Activated CD4-positive, alpha-beta memory T cell treated with anti-CD3 and anti-CD28 coated beads, Interleukin-2, amount 10 ng/mL, durations not matched to agents 7 days and 5 days (primary cell): ENCODE measurements at regions of chr12 and their contacts with region 1.

Region 1: GRCh38 chr12:50111693-50112455 is at the start of gene COX14:
- DNase-seq: peak; percentile 99
- H3K4me3 Mint-ChIP-seq: peak within 1 kb of the TSS; percentile 93
- H3K27ac Mint-ChIP-seq: peak within 1 kb of the TSS; percentile 96
- H3K4me1 Mint-ChIP-seq: peaks cover 44% of the 10 kb centered on the region
- H3K27me3 Mint-ChIP-seq: no peaks in the 10 kb centered on the region
- total RNA-seq, gene COX14: 53.5 to 55.3 TPM

Region 2: GRCh38 chr12:49967042-49967776 is 144.7 kb before region 1 on chr12:
- CTCF ChIA-PET with region 1: interaction called, 14 read pairs
- POLR2A ChIA-PET with region 1: no interaction called
- DNase-seq: peak; percentile 92
- H3K4me3 Mint-ChIP-seq: peak overlapping the region; percentile 43
- H3K27ac Mint-ChIP-seq: no peak overlapping the region
- H3K4me1 Mint-ChIP-seq: peaks cover 4% of the 10 kb centered on the region
- H3K27me3 Mint-ChIP-seq: peaks cover 46% of the 10 kb centered on the region

Region 3: GRCh38 chr12:50097952-50098351 is 13.9 kb before region 1 on chr12:
- CTCF ChIA-PET with region 1: interaction called, 181 read pairs
- POLR2A ChIA-PET with region 1: interaction called, 6 read pairs
- DNase-seq: no peak
- H3K4me3 Mint-ChIP-seq: no peak overlapping the region
- H3K27ac Mint-ChIP-seq: no peak overlapping the region
- H3K4me1 Mint-ChIP-seq: no peaks in the 10 kb centered on the region
- H3K27me3 Mint-ChIP-seq: no peaks in the 10 kb centered on the region

Region 4: DNA sequence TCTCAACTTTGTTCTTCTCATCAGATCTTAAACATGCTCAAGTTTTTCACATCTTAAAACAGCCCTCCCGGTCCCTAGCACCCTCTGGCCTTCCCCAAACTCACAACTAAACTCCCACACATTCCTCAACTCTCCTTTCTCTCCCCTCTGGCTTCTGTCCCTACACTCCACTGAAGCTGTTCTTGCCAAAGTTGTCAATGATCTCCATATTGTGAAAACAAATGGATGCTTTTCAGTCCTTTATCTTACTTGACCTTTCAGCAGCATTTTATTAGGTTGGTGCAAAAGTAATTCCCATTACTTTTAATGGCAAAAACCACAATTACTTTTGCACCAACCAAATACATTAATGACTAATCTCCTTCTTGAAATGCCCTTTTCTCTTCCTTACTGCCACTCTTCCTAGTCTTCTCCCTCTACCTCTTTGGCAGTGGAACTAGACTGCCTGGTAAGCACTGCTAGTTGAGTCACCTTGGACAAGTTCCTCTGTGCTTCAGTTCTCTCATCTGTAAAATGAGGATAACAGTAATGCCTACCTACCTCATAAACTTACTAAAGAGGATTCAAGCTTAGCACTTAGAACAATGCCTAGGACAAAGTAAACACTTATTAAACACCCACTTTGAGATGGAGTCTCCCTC is 39.3 kb after region 1 on chr12:
- CTCF ChIA-PET with region 1: interaction called, 18 read pairs
- POLR2A ChIA-PET with region 1: interaction called, 4 read pairs
- DNase-seq: no peak
- H3K4me3 Mint-ChIP-seq: no peak overlapping the region
- H3K27ac Mint-ChIP-seq: no peak overlapping the region
- H3K4me1 Mint-ChIP-seq: peaks cover 16% of the 10 kb centered on the region
- H3K27me3 Mint-ChIP-seq: no peaks in the 10 kb centered on the region

Region 5: DNA sequence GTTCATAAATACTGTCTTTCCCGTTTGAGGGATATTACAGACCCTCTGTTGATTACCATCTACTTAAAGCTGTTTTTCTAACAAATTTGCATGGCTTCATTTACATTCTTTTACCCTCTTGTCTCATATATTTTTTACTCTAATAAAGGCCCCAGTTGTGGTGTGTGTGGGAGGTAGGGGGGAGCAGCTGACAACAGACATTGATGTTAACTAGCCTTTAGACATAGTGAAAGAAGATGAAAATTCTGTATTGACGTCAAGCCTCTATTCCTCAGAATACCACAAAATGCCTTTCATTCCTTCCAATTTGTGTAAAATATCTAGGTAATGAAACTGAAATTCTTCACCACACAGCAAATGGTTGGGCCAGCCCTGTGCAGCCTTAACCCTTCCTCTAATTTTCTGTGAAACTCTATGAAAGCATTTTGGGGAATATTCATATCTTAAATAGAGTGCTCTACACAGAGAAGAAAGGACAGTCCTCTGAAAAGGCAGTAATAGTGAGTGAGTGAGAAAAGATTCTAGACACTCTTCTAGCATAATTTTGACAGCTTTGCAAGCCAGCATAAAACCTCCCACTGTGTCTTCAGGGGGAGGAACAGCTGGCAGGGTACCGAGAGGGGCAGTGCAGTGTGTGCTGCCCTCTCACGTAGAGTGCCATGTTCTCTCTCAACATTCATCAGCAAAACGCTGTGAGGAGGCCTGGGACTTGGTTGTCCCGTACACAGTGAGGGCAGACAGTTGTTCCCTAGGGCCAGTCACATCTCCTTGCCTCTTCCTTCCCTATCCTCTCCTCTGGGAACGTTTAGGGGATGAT is 75.4 kb after region 1 on chr12:
- CTCF ChIA-PET with region 1: interaction called, 13 read pairs
- POLR2A ChIA-PET with region 1: interaction called, 9 read pairs
- DNase-seq: peak; percentile 33
- H3K4me3 Mint-ChIP-seq: no peak overlapping the region
- H3K27ac Mint-ChIP-seq: peak overlapping the region; percentile 82
- H3K4me1 Mint-ChIP-seq: peaks cover 63% of the 10 kb centered on the region
- H3K27me3 Mint-ChIP-seq: no peaks in the 10 kb centered on the region

Region 6: DNA sequence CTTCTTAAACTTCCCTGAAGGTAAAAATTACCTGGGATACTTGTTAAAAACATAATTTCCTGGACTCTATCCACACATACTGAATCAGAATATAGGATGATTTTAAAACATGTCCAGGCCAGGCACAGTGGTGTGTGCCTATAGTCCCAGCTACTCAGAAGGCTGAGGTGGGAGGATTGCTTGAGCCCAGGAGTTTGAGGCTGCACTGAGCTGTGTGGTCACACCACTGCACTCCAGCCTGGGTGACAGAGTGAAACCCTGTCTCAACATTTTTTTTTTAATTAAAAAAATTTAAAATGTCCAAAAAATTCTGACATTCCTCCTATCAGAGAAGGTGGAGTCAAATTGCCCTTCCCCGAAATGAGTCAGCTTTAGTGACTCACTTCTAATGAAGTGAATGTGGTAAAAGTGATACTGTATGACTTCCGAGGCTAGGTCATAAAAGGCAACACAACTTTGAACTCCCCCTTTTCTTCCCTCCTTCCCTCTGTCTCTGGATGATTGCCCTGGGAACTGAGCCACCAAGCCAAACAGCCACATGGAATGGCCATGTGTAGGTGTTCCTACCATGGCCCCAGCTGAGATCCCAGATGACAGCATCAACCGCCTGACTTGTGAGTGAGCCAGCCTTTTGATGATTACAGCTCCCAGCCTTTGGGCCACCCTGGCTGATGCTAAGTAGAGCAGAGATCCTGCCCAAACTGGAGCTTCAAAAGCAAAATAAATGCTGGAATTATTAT is 135.2 kb after region 1 on chr12:
- CTCF ChIA-PET with region 1: interaction called, 11 read pairs
- POLR2A ChIA-PET with region 1: interaction called, 7 read pairs
- DNase-seq: peak; percentile 43
- H3K4me3 Mint-ChIP-seq: peak overlapping the region; percentile 79
- H3K27ac Mint-ChIP-seq: peak overlapping the region; percentile 94
- H3K4me1 Mint-ChIP-seq: peaks cover 76% of the 10 kb centered on the region
- H3K27me3 Mint-ChIP-seq: no peaks in the 10 kb centered on the region